ENCODE measurements at regions of chr12 and their contacts with region 1.

Region 1: DNA sequence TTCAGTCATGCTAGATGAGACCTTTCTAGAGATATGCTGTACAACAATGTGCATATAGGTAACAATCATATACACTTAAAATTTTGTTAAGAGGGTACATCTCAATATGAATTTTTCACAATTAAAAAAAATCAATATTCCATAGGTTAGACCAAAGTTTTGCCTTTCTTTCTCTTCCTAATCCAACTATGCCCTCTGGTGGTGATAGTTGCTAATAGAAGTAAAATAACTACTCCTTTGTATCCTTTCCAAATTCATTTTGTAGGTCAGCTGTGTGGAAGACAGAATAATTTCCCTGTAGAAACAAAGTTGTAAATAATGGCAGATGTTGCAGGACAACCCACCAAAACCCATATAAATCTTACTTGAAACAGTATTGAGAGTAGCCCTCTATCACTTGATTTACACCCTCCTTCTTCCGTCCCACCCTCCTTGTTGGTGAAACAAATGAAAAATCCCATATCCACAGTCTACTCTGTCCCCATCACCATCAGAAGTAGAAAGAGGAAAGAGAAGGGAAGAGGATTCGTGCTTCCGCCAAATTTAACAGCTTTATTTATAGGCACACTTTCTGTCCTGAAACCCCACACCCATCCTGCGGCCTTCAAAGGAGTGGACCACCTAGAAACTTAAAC is 34.2 kb upstream of the KICS2 start:
- DNase-seq: peak in 7 of 9 donors; percentile 18 to 60 (median 47)
- ATAC-seq: peak; percentile 66
- H3K4me3 ChIP-seq: no peak overlapping the region
- H3K4me3 Mint-ChIP-seq: no peak overlapping the region
- H3K27ac ChIP-seq: no peak overlapping the region
- H3K27ac Mint-ChIP-seq: no peak overlapping the region
- H3K4me1 ChIP-seq: no peaks in the 10 kb centered on the region
- H3K4me1 Mint-ChIP-seq: peaks cover 0 to 7% (median 0%) of the 10 kb centered on the region in 7 donors
- H3K27me3 ChIP-seq: no peaks in the 10 kb centered on the region
- H3K27me3 Mint-ChIP-seq: no peaks in the 10 kb centered on the region

Region 2: DNA sequence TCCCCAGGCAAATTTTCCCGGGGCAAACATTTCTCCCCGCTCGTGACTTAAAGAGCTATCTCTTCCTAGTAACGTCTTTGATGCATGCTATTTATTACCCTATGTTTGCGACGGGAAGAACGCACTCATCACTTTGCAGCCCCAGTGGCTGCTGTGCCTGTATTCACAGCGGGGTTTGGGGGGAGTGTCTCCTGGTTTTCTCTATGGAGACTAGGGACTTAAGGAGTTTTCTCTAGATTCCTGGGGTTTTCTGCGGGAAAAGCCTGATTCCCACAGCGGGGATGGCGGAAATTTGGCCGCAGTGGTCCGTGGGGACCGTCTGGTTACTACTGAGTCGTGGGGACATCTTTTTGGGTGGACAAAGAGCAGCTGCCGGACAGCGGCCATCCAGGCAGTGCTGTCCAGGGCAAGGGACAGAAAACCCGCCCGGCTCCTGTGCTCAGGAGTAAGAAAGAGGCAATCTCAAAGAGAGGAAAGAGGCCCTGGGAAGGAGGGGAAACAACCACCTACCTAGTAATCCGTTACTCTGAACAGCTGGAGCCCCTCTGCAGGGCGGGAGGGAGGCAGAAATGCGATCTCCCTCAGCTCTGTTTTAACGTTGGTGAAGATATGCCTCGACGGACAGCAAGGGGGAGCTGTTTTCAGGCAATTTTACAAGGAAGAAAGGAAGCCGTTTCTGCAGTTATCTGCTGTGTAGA is 1104.5 kb before region 1 on chr12:
- CTCF ChIA-PET with region 1: no interaction called
- POLR2A ChIA-PET with region 1: no interaction called
- intact Hi-C with region 1: loop called in 1 of 2 experiments (anchors 5 kb)
- DNase-seq: no peak
- ATAC-seq: peak; percentile 40
- H3K4me3 ChIP-seq: no peak overlapping the region
- H3K4me3 Mint-ChIP-seq: peak overlapping the region in 9 of 10 donors; percentile 12 to 83 (median 58)
- H3K27ac ChIP-seq: no peak overlapping the region
- H3K27ac Mint-ChIP-seq: peak overlapping the region in 1 of 9 donors; percentile 68
- H3K4me1 ChIP-seq: peaks cover 0 to 6% of the 10 kb centered on the region in 2 donors
- H3K4me1 Mint-ChIP-seq: peaks cover 11 to 27% (median 22%) of the 10 kb centered on the region in 7 donors
- H3K27me3 ChIP-seq: peaks cover 0 to 13% of the 10 kb centered on the region in 2 donors
- H3K27me3 Mint-ChIP-seq: peaks cover 58 to 71% (median 61%) of the 10 kb centered on the region in 5 donors

Region 3: GRCh38 chr12:63802012-63802608 is 454.2 kb before region 1 on chr12:
- CTCF ChIA-PET with region 1: no interaction called
- POLR2A ChIA-PET with region 1: interaction called, 3 read pairs
- intact Hi-C with region 1: loop called in 1 of 2 experiments (anchors 1 kb)
- DNase-seq: peak in 6 of 9 donors; percentile 3 to 34 (median 26)
- ATAC-seq: no peak
- H3K4me3 ChIP-seq: no peak overlapping the region
- H3K4me3 Mint-ChIP-seq: no peak overlapping the region
- H3K27ac ChIP-seq: no peak overlapping the region
- H3K27ac Mint-ChIP-seq: no peak overlapping the region
- H3K4me1 ChIP-seq: no peaks in the 10 kb centered on the region
- H3K4me1 Mint-ChIP-seq: peaks cover 0 to 4% (median 0%) of the 10 kb centered on the region in 7 donors
- H3K27me3 ChIP-seq: no peaks in the 10 kb centered on the region
- H3K27me3 Mint-ChIP-seq: no peaks in the 10 kb centered on the region

Region 4: GRCh38 chr12:63838411-63838810 is 417.9 kb before region 1 on chr12:
- CTCF ChIA-PET with region 1: interaction called, 13 read pairs
- POLR2A ChIA-PET with region 1: no interaction called
- intact Hi-C with region 1: loop called (anchors 1 kb)
- DNase-seq: no peak
- ATAC-seq: no peak
- H3K4me3 ChIP-seq: no peak overlapping the region
- H3K4me3 Mint-ChIP-seq: no peak overlapping the region
- H3K27ac ChIP-seq: no peak overlapping the region
- H3K27ac Mint-ChIP-seq: no peak overlapping the region
- H3K4me1 ChIP-seq: no peaks in the 10 kb centered on the region
- H3K4me1 Mint-ChIP-seq: peaks cover 0 to 5% (median 4%) of the 10 kb centered on the region in 7 donors
- H3K27me3 ChIP-seq: peaks cover 0 to 4% of the 10 kb centered on the region in 2 donors
- H3K27me3 Mint-ChIP-seq: peaks cover 7 to 28% (median 17%) of the 10 kb centered on the region in 5 donors

Region 5: GRCh38 chr12:64222009-64222765 is 34.1 kb before region 1 on chr12 and contains the start of gene KICS2:
- CTCF ChIA-PET with region 1: no interaction called
- POLR2A ChIA-PET with region 1: no interaction called
- intact Hi-C with region 1: no loop called
- DNase-seq: peak; percentile 89 to 95 (median 93)
- ATAC-seq: peak; percentile 96
- H3K4me3 ChIP-seq: peak within 1 kb of the TSS; percentile 87
- H3K4me3 Mint-ChIP-seq: peak within 1 kb of the TSS; percentile 86 to 100 (median 98)
- H3K27ac ChIP-seq: peak within 1 kb of the TSS; percentile 92
- H3K27ac Mint-ChIP-seq: peak within 1 kb of the TSS; percentile 94 to 100 (median 98)
- H3K4me1 ChIP-seq: peaks cover 8 to 19% of the 10 kb centered on the region in 2 donors
- H3K4me1 Mint-ChIP-seq: peaks cover 17 to 51% (median 41%) of the 10 kb centered on the region in 7 donors
- H3K27me3 ChIP-seq: no peaks in the 10 kb centered on the region
- H3K27me3 Mint-ChIP-seq: peaks cover 0 to 21% (median 8%) of the 10 kb centered on the region in 5 donors
- total RNA-seq, gene KICS2: 11.7 to 26.9 (median 19.5) TPM

Region 6: DNA sequence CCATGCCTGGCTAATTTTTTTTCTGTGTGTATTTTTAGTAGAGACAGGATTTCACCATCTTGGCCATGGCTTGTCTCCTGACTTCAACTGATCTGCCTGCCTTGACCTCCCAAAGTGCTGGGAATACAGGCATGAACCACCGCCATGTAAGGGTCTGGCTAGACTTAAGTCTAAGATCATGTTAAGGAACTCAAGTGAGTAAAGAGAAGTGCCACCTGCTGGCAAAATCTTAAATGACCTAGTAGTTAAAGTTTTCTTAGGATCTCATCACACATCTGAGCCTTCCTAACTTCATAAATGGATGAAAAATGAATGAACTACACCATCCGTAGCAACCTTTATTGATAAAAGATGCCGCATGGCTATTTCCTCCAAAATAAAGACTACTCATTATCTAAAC is 135.9 kb after region 1 on chr12:
- CTCF ChIA-PET with region 1: no interaction called
- POLR2A ChIA-PET with region 1: no interaction called
- intact Hi-C with region 1: loop called in 1 of 2 experiments (anchors 1 kb)
- DNase-seq: peak in 6 of 9 donors; percentile 18 to 52 (median 42)
- ATAC-seq: peak; percentile 57
- H3K4me3 ChIP-seq: no peak overlapping the region
- H3K4me3 Mint-ChIP-seq: peak overlapping the region; percentile 21 to 86 (median 52)
- H3K27ac ChIP-seq: no peak overlapping the region
- H3K27ac Mint-ChIP-seq: no peak overlapping the region
- H3K4me1 ChIP-seq: no peaks in the 10 kb centered on the region
- H3K4me1 Mint-ChIP-seq: peaks cover 2 to 26% (median 17%) of the 10 kb centered on the region in 7 donors
- H3K27me3 ChIP-seq: no peaks in the 10 kb centered on the region
- H3K27me3 Mint-ChIP-seq: peaks cover 0 to 22% (median 0%) of the 10 kb centered on the region in 5 donors

Region 7: DNA sequence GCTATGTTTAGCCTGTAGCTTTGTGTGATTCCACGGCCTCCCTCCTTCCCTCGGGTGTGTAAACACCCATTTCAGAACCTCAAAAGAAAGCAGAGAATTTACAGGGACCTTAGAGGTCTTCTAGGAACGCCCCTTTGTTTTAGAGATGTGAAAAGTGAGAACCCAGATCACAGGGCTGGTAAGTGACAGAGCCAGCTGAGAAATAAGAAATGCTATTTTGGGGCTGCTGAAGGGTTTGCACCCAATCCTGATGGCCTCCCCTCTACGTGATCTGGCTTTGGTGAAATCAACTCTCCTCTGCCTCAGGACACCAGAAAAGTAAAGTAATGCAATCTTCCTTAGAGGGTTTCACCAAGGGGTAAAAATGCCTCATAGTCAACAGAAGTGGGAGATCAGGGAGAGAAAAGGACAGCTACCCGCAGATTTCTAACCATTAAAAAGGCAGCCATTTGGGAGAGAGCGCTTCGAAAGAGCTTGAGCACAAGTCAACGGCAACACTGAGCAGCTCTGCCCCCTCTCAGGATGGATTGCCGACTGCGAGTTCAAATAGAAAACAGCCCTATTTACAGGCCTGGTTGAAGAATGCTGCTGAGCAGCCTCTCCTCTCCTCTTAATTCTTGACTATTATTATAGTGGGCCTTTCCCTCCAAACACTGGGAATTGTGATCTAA is 275.5 kb after region 1 on chr12:
- CTCF ChIA-PET with region 1: no interaction called
- POLR2A ChIA-PET with region 1: no interaction called
- intact Hi-C with region 1: no loop called
- DNase-seq: no peak
- ATAC-seq: no peak
- H3K4me3 ChIP-seq: no peak overlapping the region
- H3K4me3 Mint-ChIP-seq: no peak overlapping the region
- H3K27ac ChIP-seq: no peak overlapping the region
- H3K27ac Mint-ChIP-seq: peak overlapping the region in 1 of 9 donors; percentile 36
- H3K4me1 ChIP-seq: no peaks in the 10 kb centered on the region
- H3K4me1 Mint-ChIP-seq: peaks cover 0 to 1% (median 0%) of the 10 kb centered on the region in 7 donors
- H3K27me3 ChIP-seq: no peaks in the 10 kb centered on the region
- H3K27me3 Mint-ChIP-seq: peaks cover 0 to 2% (median 0%) of the 10 kb centered on the region in 5 donors

Region 8: DNA sequence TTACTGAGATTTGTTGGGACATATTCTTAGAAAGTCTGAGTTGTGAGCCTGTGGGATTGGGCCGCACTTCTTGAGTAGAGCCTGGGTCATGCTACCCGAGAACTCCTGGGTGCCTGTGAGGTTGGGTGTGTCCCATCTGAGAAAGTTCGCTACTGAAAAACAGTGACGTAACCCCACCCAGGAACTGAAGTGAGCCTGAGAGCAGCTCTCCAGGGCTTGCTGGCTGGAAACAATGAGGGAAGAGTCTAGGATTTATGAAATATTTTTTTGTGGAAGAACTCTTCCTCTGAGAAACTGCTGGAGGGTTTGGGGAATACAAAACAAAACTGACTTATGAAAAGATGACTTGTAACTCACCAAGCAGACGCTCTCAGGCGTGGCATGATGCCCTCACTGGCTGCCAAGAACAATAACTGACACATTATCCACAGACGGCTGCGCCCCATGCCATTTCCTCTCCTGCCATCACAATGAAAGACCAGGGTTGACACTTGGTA is 423.3 kb after region 1 on chr12:
- CTCF ChIA-PET with region 1: no interaction called
- POLR2A ChIA-PET with region 1: no interaction called
- intact Hi-C with region 1: no loop called
- DNase-seq: peak in 8 of 9 donors; percentile 33 to 83 (median 81)
- ATAC-seq: peak; percentile 76
- H3K4me3 ChIP-seq: peak overlapping the region; percentile 37
- H3K4me3 Mint-ChIP-seq: peak overlapping the region; percentile 64 to 85 (median 74)
- H3K27ac ChIP-seq: peak overlapping the region; percentile 76
- H3K27ac Mint-ChIP-seq: peak overlapping the region; percentile 94 to 100 (median 97)
- H3K4me1 ChIP-seq: peaks cover 93 to 97% of the 10 kb centered on the region in 2 donors
- H3K4me1 Mint-ChIP-seq: peaks cover 60 to 99% (median 92%) of the 10 kb centered on the region in 7 donors
- H3K27me3 ChIP-seq: no peaks in the 10 kb centered on the region
- H3K27me3 Mint-ChIP-seq: no peaks in the 10 kb centered on the region

Measured in naive thymus-derived CD4-positive, alpha-beta T cell (primary cell).